Activated T-helper 2 cell treated with anti-CD3 and anti-CD28 coated beads, Interferon-gamma antibody, Interleukin-2, Interleukin-4, amounts not matched to agents 10 μg/mL and 5 μg/mL and 100 μg/mL, durations not matched to agents 14 hours and 24 hours and 36 hours (primary cell): ENCODE measurements at regions of chr10 and their contacts with region 1.

Region 1: DNA sequence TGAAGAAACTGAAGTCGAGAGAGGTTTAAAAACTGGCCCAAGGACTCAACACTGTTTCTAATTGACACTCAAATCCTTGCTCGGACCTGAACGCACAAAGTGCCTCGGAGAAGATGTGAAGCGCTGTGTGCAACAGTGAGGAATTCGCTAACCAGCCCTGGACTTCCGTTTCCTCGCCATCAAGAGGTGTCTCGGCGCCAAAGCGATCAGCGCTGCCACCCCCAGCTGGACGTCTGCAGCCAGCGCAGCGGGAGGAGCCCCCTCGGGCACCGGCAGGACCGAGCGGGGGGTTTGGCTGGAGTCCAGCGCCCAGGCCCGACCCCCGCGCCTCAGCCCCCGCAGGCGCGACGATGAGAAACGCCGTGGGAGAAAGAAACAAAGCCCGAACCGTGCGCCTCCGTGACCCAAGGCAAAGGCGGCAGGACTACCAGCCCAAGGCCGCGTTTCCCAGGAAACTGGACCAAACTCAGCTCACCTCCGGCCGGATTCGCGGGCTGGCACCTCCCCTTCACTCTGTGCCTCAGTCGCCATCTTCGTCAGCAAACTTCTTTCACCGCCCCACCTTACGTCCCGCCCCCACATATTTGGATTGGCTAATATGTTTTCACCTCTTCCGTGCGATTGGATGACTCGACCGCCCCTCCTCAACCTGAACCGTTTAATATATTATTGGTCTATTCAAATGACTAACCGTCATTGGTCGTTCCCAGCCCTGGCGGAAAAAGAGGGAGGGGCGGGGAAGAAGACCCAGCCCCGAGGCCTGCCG is at the start of gene ARHGAP19:
- DNase-seq: peak; percentile 93
- H3K4me3 Mint-ChIP-seq: peak within 1 kb of the TSS; percentile 94
- H3K27ac Mint-ChIP-seq: peak within 1 kb of the TSS; percentile 83
- H3K4me1 Mint-ChIP-seq: peaks cover 24% of the 10 kb centered on the region
- H3K27me3 Mint-ChIP-seq: no peaks in the 10 kb centered on the region
- total RNA-seq, gene ARHGAP19: 25.3 and 29.9 TPM in 2 replicates

Region 2: GRCh38 chr10:97123765-97124164 is 168.5 kb before region 1 on chr10:
- intact Hi-C with region 1: no loop called
- DNase-seq: no peak
- H3K4me3 Mint-ChIP-seq: no peak overlapping the region
- H3K27ac Mint-ChIP-seq: no peak overlapping the region
- H3K4me1 Mint-ChIP-seq: no peaks in the 10 kb centered on the region
- H3K27me3 Mint-ChIP-seq: no peaks in the 10 kb centered on the region

Region 3: GRCh38 chr10:97318772-97319651 is 26.7 kb after region 1 on chr10 and contains the start of gene FRAT1:
- intact Hi-C with region 1: loop called (anchors 1 kb)
- DNase-seq: peak; percentile 89
- H3K4me3 Mint-ChIP-seq: peak within 1 kb of the TSS; percentile 91
- H3K27ac Mint-ChIP-seq: peak within 1 kb of the TSS; percentile 99
- H3K4me1 Mint-ChIP-seq: peaks cover 19% of the 10 kb centered on the region
- H3K27me3 Mint-ChIP-seq: peaks cover 10% of the 10 kb centered on the region
- total RNA-seq, gene FRAT1: 2.9 and 3.4 TPM in 2 replicates

Region 4: DNA sequence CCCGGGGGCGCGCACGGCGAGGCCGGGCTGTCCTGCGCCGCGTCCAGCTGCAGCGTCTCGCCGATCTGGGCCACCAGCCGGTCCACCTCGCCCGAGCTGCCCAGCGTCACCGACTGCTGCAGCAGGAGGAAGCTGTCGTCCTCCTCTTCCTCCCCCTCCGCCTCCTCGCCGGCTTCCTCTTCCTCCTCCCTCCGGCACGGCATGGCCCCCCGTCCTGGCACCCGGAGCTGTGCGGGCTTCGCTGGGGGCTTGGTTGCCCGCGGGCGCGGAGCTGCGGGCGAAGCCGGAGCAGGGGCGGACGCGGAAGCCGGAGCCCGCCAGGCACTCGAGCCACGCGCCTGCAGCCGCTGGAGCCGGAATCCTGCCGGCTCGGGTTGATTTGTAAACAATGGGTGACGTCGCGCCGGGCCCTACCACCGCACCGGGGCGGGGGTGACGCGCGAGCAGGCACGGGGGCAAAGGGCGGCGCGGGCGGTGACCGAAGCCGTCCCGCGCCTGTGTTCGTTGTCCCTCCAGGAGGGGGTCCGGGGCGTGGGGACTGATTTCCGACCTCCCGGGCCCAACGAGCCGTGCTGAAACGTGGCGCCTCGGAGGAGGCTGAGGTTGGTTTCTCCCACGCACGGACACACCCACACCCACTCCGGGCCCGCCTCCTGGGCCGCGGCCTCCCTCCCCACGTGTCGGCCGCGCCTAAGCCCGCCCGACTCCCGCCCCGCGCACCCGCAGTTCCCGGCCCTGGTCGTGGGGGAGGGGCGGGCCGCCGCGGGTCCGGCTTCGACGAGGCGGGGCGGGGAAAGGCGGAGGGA is 42.3 kb after region 1 on chr10 and contains the start of gene FRAT2:
- intact Hi-C with region 1: loop called (anchors 1 kb)
- DNase-seq: peak; percentile 85
- H3K4me3 Mint-ChIP-seq: peak within 1 kb of the TSS; percentile 85
- H3K27ac Mint-ChIP-seq: peak within 1 kb of the TSS; percentile 86
- H3K4me1 Mint-ChIP-seq: peaks cover 25% of the 10 kb centered on the region
- H3K27me3 Mint-ChIP-seq: peaks cover 22% of the 10 kb centered on the region
- total RNA-seq, gene FRAT2: 10.4 and 10.6 TPM in 2 replicates

Region 5: GRCh38 chr10:97434055-97434454 is 141.8 kb after region 1 on chr10:
- intact Hi-C with region 1: no loop called
- DNase-seq: no peak
- H3K4me3 Mint-ChIP-seq: no peak overlapping the region
- H3K27ac Mint-ChIP-seq: no peak overlapping the region
- H3K4me1 Mint-ChIP-seq: peaks cover 4% of the 10 kb centered on the region
- H3K27me3 Mint-ChIP-seq: no peaks in the 10 kb centered on the region